ENCODE measurements at regions of chr1 and their contacts with region 1.

Region 1: DNA sequence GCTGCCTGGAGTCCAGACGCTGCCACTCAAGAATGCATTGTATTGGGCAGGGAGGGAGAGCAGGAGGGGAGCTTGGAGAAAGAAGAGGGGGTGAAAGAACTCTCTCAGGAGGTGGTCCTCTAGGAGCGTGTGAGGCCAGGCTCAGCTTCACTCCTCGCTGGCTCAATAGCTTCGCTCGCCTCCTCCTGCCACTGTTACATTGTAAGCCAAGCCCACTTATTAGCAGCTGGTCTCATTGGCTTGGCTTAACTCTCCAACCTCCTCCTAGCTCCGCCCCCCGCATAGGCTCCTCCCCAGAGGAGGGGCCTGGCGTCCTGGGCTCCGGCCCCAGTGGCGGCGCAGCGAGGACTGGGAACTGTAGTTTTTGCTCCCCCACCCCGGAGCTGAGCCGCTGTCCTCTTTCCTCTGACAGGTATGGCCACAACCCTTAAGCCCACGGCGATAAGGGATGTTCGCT is at the start of gene KCNN3:
- DNase-seq: peak; percentile 69
- H3K4me3 ChIP-seq: peak within 1 kb of the TSS; percentile 27
- CTCF ChIP-seq: no peak

Region 2: GRCh38 chr1:154689070-154689469 is 181.1 kb before region 1 on chr1:
- in situ Hi-C with region 1: loop called (anchors 5 kb)
- DNase-seq: no peak
- H3K4me3 ChIP-seq: no peak overlapping the region
- CTCF ChIP-seq: no peak

Region 3: GRCh38 chr1:154906621-154907081 is 36.5 kb after region 1 on chr1:
- in situ Hi-C with region 1: no loop called
- DNase-seq: no peak
- H3K4me3 ChIP-seq: no peak overlapping the region
- CTCF ChIP-seq: no peak

Region 4: DNA sequence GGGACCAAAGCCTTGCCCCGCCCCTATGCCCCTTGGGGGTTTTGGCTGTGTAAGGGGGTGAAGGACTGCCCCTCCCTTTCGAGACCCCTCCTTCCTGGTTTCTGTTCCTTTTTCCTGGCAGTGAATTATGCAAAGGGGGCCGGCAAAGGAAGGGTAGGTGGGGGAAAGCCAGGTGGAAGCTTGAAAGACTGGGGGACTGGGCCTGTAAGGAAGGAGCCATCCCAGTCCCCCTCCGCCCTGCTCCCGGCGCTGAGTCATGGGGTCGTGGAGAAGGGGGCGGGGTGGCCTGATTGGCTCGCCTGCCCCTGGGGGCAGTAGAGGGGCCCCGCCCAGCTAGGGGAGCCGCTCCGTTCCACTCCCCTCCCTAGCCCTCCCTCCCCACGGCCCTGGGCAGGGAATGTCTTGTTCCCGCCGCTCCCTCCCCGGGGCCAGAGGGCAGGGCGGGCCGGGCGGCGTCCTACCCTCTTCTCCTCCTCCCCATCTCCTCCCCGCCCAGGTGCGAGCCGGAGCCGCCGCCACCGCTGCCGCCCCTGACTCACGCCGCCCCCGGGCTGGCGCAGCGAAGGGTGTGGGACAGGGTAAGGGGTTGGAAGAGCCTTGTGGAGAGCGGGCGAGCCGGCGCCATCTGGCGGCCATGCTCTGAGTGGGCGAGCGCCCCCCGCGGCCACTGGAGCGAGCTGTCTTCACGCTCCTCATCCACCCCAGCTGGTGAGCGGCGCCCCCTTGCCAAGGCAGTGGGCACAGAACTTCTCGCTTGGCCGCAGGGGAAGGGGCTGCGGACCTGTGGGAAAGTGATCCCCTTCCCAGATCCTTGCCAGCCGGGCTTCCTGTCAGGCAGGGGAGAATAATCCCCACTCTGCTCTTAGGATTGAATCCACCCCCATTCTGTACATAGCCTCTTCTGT is 147.2 kb after region 1 on chr1:
- in situ Hi-C with region 1: loop called (anchors 5 kb)
- DNase-seq: peak; percentile 72
- H3K4me3 ChIP-seq: peak overlapping the region; percentile 36
- CTCF ChIP-seq: peak; percentile 99